ENCODE measurements at regions of chr21 and their contacts with region 1.

Region 1: GRCh38 chr21:42258153-42258884 is 39.4 kb downstream of the ABCG1 start:
- DNase-seq: peak in 1 of 2 donors; percentile 69
- ATAC-seq: peak in 1 of 2 donors; percentile 68
- H3K4me3 ChIP-seq: no peak overlapping the region
- H3K27ac ChIP-seq: peak overlapping the region; percentile 24 to 41 (median 34)
- H3K4me1 ChIP-seq: peaks cover 26 to 31% of the 10 kb centered on the region in 2 donors
- H3K27me3 ChIP-seq: no peaks in the 10 kb centered on the region
- CTCF ChIP-seq: peak; percentile 73 to 87 (median 84)
- POLR2A ChIP-seq: no peak

Region 2: GRCh38 chr21:42145569-42146272 is 112.6 kb before region 1 on chr21:
- in situ Hi-C with region 1: loop called in 2 of 4 experiments (anchors 10 kb)
- intact Hi-C with region 1: loop called (anchors 1 kb)
- DNase-seq: peak; percentile 17 to 35
- ATAC-seq: peak; percentile 56 to 81
- H3K4me3 ChIP-seq: no peak overlapping the region
- H3K27ac ChIP-seq: no peak overlapping the region
- H3K4me1 ChIP-seq: no peaks in the 10 kb centered on the region
- H3K27me3 ChIP-seq: no peaks in the 10 kb centered on the region
- CTCF ChIP-seq: peak; percentile 86 to 95 (median 91)
- POLR2A ChIP-seq: no peak

Region 3: DNA sequence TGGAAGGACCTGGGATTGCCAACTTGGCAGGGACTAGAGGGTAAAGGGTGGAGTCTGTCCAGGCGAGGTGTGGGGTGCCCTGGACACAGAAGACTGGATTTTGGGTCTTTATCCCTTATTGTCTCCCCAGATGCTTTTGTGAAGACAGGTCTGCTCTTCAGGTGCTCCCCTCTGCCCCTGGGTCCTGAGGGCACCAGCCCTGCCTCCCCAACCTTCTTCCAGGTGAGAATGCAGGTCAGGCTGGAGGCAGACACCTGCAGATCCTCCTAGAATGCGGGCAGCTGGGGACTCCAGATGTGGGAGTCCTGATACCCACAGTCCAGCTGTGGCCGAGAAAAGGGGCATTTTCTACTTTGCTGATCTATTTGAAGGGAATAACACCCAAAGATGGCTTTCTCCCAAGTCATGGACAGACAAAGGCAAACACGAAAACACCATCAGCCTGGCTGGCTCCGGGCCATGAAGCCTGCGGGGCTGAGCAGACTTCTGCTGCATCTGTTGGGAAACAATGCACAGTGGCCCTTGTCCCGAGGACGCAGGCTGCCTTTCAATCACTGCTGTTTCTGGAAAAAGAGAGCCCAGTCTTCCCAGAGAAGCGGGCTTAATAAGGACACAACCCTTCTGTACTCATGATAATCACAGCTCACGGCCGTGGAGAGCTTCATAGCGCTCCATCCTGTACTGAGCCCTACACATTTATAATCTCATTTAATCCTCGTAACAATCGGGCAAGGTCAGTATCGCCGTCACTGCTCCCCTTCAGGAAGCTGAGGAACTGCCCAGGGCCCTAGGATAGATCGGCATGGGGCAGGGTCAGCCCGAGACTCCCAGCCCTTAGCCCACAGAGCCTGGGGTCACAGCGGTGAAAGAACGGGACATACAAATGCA is 101.4 kb before region 1 on chr21:
- in situ Hi-C with region 1: loop called in 2 of 4 experiments (anchors 10 kb)
- intact Hi-C with region 1: no loop called
- DNase-seq: no peak
- ATAC-seq: peak in 1 of 2 donors; percentile 18
- H3K4me3 ChIP-seq: no peak overlapping the region
- H3K27ac ChIP-seq: no peak overlapping the region
- H3K4me1 ChIP-seq: peaks cover 0 to 5% of the 10 kb centered on the region in 2 donors
- H3K27me3 ChIP-seq: no peaks in the 10 kb centered on the region
- CTCF ChIP-seq: no peak
- POLR2A ChIP-seq: no peak

Region 4: GRCh38 chr21:42164064-42164789 is 94.1 kb before region 1 on chr21:
- in situ Hi-C with region 1: loop called in 2 of 4 experiments (anchors 10 kb)
- intact Hi-C with region 1: loop called (anchors 1 kb)
- DNase-seq: peak; percentile 42 to 62
- ATAC-seq: peak in 1 of 2 donors; percentile 73
- H3K4me3 ChIP-seq: no peak overlapping the region
- H3K27ac ChIP-seq: peak overlapping the region in 3 of 4 donors; percentile 2 to 31 (median 30)
- H3K4me1 ChIP-seq: no peaks in the 10 kb centered on the region
- H3K27me3 ChIP-seq: no peaks in the 10 kb centered on the region
- CTCF ChIP-seq: peak; percentile 25 to 65 (median 52)
- POLR2A ChIP-seq: no peak

Region 5: DNA sequence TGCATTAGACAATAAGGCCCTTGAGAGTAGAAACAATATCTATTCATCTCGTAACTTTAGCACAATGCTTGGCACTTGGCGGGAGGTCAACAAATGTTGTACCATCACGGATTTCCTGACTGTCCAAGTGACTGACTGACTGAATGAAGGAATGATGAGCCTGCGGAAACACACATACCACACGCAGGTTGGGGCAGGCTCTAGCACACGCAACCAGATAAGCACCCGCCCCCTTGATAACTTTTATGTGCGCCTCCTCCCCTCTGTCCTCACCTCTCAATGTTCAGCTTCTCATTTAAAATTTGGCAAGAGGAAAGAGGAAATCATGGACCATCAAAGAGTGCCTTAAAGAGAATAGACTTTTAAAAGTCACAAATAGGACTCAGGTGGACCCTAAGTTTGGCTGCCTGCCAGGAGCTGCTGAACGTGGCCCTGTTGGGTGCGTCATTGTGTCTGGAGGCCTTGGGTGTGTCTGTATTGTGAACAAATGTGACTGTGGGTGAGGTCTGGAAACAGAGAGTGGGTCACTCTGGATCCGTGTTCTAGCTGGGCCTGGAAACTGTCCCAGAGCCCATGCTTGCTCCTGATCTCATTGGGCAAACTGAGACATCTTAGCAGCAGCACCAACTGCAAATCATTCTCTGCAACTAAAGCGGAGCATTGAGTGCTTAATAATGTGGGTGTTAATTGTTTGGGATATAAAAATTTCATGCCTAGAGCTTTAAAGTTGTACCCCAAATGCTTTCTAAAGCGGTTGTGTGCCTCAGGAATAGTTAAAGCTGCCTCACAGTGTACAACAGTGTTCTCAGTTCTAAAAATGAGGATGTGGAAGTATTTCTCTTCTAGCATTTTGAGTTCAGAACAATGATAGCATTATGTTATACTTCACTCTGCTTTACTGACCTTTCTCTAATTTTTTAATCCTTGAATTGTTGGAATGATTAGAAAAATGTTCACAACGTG is 86.9 kb before region 1 on chr21:
- in situ Hi-C with region 1: loop called in 1 of 4 experiments (anchors 10 kb)
- intact Hi-C with region 1: no loop called
- DNase-seq: no peak
- ATAC-seq: peak; percentile 53 to 70
- H3K4me3 ChIP-seq: no peak overlapping the region
- H3K27ac ChIP-seq: peak overlapping the region in 3 of 4 donors; percentile 4 to 43 (median 21)
- H3K4me1 ChIP-seq: no peaks in the 10 kb centered on the region
- H3K27me3 ChIP-seq: no peaks in the 10 kb centered on the region
- CTCF ChIP-seq: no peak
- POLR2A ChIP-seq: no peak

Region 6: GRCh38 chr21:42199488-42200458 is 58.5 kb before region 1 on chr21:
- in situ Hi-C with region 1: loop called in 1 of 4 experiments (anchors 10 kb)
- intact Hi-C with region 1: no loop called
- DNase-seq: no peak
- ATAC-seq: peak; percentile 90 to 94
- H3K4me3 ChIP-seq: no peak overlapping the region
- H3K27ac ChIP-seq: peak overlapping the region in 3 of 4 donors; percentile 23 to 59 (median 26)
- H3K4me1 ChIP-seq: peaks cover 0 to 5% of the 10 kb centered on the region in 2 donors
- H3K27me3 ChIP-seq: no peaks in the 10 kb centered on the region
- CTCF ChIP-seq: no peak
- POLR2A ChIP-seq: no peak

Region 7: DNA sequence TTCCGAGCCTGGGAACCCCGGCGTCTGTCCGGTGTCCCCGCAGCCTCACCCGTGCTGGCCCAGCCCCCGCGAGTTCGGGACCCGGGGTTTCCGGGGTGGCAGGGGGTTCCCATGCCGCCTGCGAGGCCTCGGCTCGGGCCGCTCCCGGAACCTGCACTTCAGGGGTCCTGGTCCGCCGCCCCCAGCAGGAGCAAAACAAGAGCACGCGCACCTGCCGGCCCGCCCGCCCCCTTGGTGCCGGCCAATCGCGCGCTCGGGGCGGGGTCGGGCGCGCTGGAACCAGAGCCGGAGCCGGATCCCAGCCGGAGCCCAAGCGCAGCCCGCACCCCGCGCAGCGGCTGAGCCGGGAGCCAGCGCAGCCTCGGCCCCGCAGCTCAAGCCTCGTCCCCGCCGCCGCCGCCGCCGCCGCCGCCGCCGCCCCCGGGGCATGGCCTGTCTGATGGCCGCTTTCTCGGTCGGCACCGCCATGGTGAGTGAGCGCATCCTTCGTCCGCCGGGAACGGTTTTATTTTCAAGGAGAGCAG is 39.4 kb before region 1 on chr21 and contains the start of gene ABCG1:
- in situ Hi-C with region 1: no loop called
- intact Hi-C with region 1: loop called (anchors 2 kb)
- DNase-seq: no peak
- ATAC-seq: peak; percentile 30 to 45
- H3K4me3 ChIP-seq: peak within 1 kb of the TSS; percentile 68 to 97 (median 86)
- H3K27ac ChIP-seq: peak within 1 kb of the TSS; percentile 78 to 99 (median 78)
- H3K4me1 ChIP-seq: peaks cover 15 to 17% of the 10 kb centered on the region in 2 donors
- H3K27me3 ChIP-seq: no peaks in the 10 kb centered on the region
- CTCF ChIP-seq: no peak
- POLR2A ChIP-seq: peak; percentile 84 to 89
- total RNA-seq, gene ABCG1: 3.4 to 43.3 (median 10.3) TPM

Region 8: GRCh38 chr21:42245331-42246193 is 12.8 kb before region 1 on chr21:
- in situ Hi-C with region 1: no loop called
- intact Hi-C with region 1: no loop called
- DNase-seq: no peak
- ATAC-seq: peak in 1 of 2 donors; percentile 54
- H3K4me3 ChIP-seq: no peak overlapping the region
- H3K27ac ChIP-seq: no peak overlapping the region
- H3K4me1 ChIP-seq: peaks cover 0 to 7% of the 10 kb centered on the region in 2 donors
- H3K27me3 ChIP-seq: no peaks in the 10 kb centered on the region
- CTCF ChIP-seq: no peak
- POLR2A ChIP-seq: no peak